ENCODE measurements at regions of chr15 and their contacts with region 1.

Region 1: DNA sequence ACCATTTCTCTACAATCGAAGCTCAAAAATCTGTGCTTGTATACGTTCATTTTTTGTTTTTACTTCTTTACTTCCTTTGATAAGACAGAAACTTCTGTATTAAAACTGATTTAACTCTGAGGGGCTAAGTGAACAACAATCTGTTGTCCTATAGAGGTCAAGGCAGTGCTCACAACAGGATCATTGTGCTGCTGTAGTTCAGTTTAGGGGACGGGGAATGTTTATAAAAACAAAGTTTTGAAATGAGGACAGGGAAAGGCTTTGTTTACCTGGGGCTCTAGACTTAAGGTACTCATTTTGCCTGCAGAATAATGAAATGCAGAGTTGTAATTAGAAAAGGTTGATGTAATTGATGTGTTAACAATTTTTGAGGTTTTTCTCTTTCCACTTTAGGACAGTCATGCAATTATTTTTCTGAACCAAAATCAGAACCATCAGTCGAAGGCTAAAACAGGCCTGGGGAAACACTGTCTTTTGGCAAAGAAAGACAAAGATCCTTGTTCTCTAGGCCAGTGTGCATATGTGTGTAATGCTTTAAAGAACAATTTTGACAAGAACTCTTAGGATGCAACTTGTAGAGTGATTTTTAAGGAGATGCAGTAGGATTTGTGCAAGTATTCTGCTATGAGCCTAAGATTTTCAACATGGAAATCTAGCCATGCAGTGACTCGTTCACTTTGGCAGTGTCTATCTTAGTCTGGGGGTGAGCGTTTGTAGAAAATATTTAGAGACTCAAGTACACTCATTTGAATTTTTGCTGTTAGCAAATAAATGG is 165.2 kb downstream of the PGPEP1L start:
- DNase-seq: no peak
- ATAC-seq: no peak

Region 2: DNA sequence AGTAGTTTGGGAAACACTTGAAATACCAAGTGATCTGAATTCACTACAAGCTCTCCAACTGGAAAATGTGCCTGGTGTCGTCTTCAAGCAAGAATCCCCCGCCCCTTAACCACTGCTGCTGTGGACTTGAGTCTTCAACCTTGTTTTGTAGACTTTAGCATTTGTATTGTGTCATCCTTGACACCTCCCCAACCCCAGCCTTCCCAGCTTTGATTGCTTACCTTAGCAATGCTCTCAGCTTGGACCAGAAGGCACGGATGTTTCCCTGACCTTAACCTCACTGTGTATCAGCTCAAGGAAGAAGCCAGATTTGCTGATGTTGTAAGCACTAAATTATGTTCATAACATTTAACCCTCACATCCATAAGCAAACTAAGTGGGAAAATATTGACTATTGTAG is 47.6 kb before region 1 on chr15:
- intact Hi-C with region 1: loop called in 1 of 2 experiments (anchors 5 kb)
- DNase-seq: no peak
- ATAC-seq: no peak